Sciatic nerve (tissue), 2 donors: ENCODE measurements at regions of chr20 and their contacts with region 1.

Region 1: GRCh38 chr20:46820682-46821081 is 74.0 kb upstream of the EYA2 start:
- DNase-seq: no peak
- ATAC-seq: no peak

Region 2: DNA sequence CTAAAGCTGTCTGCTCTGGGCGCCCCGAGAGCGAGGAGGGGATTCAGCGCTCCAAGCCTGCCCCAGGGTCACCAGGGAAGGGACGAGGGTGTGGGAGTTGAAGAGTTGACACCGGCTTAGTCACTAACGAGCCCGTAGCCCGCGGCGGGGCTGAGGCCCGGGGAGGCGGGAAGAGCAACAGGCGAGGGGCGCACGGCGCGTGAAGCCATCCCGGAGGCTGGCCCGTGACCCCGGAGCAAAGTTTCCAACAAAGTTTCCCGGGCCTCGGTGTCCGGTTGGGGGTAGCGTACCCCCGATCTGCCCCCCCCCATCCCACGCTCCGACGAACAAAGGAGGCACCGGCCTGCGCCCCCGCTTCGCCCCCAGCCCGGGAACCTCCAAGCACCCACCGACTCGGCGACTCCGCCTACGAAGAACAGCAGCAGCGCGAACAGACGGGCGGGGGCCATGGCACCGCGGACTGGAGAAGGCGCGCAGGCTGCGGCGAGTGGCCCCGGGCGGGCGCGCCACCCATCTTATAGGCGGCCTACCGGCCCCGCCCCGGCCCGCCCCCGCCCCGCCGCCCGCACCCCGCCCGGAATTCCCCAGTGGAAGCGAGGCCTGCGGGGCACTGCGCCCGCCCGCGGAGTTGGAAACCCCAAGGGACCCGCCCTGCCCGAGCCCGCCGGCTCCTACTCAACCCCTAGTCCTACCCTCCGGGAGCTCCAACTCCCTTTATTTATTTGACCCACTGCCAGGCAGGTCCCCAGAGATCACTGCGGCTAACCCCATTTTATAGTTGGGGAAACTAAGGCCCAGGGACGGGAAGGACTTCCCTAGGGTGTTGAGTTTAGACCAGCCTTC is 1472.5 kb before region 1 on chr20 and contains the start of gene SDC4:
- intact Hi-C with region 1: no loop called
- DNase-seq: peak; percentile 79
- ATAC-seq: peak; percentile 85
- total RNA-seq, gene SDC4: 77.7 TPM

Region 3: DNA sequence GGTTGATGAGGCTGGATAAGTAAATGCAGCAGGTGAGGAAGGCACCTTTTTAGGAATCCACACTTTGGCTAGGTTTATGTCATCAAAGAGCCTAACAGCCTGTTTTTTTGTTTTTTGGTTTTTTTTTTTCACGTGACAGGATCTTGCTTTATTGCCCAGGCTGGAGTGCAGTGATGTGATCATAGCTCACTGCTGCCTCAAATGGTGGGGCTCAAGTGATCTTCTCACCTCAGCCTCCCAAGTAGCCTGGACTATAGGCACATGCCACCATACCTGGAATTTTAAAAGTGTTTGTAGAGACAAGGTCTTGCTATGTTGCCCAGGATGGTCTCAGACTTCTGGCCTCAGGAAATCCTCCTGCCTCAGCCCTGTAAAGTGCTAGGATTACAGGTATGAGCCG is 343.5 kb before region 1 on chr20:
- intact Hi-C with region 1: no loop called
- DNase-seq: no peak
- ATAC-seq: no peak

Region 4: DNA sequence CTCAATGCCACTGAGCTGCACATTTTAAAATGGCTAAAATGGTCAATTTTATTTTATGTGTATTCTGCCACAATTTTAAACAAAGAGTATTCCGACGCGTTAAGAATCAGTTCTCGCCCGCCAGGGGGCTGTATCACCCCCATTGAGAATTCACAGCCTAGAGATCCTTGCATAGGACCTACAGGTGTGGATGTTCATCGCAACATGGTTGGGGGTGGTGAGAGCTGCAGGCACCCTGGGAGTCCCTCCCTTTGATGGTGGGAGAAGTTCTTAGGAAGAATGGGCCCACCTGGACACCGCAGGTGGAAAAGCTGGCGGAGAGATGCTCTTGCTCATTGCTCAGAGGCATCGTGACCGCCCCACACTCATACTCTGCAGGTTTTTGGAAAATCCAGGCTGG is 47.8 kb before region 1 on chr20:
- intact Hi-C with region 1: no loop called
- DNase-seq: no peak
- ATAC-seq: no peak

Region 5: GRCh38 chr20:46844965-46845364 is 24.3 kb after region 1 on chr20:
- intact Hi-C with region 1: loop called (anchors 2 kb)
- DNase-seq: no peak
- ATAC-seq: no peak